Ascending aorta (tissue), 2 donors: ENCODE measurements at regions of chr19 and their contacts with region 1.

Region 1: DNA sequence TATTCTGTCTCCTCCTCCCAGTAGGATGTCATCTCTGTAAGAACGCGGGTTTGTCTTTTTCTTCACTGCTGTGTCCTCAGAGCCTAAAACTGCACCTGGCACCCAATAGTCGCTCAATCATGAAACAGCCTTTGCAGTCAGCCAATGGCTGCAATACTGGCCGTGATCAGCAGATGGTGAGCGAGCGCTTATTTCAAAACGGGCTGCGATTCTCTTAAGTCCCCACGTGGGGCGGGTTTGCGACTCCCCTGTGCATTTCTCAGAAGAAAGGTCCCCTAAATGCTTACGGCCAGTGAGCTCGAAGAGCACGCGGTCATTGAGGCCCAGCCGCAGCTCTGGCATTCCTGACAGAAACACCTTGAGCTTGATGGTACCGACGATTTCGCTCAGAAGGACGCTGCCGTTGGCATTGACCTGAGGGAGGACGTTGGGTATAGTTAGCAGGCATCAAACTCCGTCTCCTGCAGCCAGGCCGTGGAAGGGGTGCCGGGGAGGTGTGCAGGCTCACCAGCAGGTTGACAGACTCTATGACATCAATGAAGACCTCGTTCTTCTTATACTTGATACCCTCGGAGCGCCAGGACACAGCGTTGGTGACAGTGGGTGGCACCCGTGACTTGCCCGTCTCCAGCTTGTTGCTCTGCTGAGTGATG is 6.0 kb downstream of the AP1M2 start:
- DNase-seq: peak; percentile 60 to 95
- H3K4me3 ChIP-seq: no peak overlapping the region
- H3K27ac ChIP-seq: no peak overlapping the region
- H3K4me1 ChIP-seq: peaks cover 0 to 3% of the 10 kb centered on the region in 2 donors
- H3K27me3 ChIP-seq: no peaks in the 10 kb centered on the region
- CTCF ChIP-seq: peak; percentile 98 to 99 (median 99)

Region 2: GRCh38 chr19:10625003-10625776 is 44.1 kb after region 1 on chr19 and contains the start of gene SLC44A2:
- intact Hi-C with region 1: loop called (anchors 5 kb)
- DNase-seq: peak in 1 of 2 donors; percentile 83
- H3K4me3 ChIP-seq: peak within 1 kb of the TSS; percentile 67
- H3K27ac ChIP-seq: peak within 1 kb of the TSS; percentile 79 to 85
- H3K4me1 ChIP-seq: peaks cover 7 to 15% of the 10 kb centered on the region in 2 donors
- H3K27me3 ChIP-seq: no peaks in the 10 kb centered on the region
- CTCF ChIP-seq: no peak
- total RNA-seq, gene SLC44A2: 354 TPM

Region 3: GRCh38 chr19:10644260-10645007 is 63.3 kb after region 1 on chr19:
- intact Hi-C with region 1: loop called (anchors 1 kb)
- DNase-seq: peak; percentile 24 to 90
- H3K4me3 ChIP-seq: no peak overlapping the region
- H3K27ac ChIP-seq: peak overlapping the region; percentile 24 to 53
- H3K4me1 ChIP-seq: peaks cover 3 to 19% of the 10 kb centered on the region in 2 donors
- H3K27me3 ChIP-seq: no peaks in the 10 kb centered on the region
- CTCF ChIP-seq: peak; percentile 85 to 96 (median 87)

Region 4: GRCh38 chr19:10699650-10700335 is 118.7 kb after region 1 on chr19:
- intact Hi-C with region 1: loop called (anchors 1 kb)
- DNase-seq: no peak
- H3K4me3 ChIP-seq: no peak overlapping the region
- H3K27ac ChIP-seq: no peak overlapping the region
- H3K4me1 ChIP-seq: peaks cover 0 to 5% of the 10 kb centered on the region in 2 donors
- H3K27me3 ChIP-seq: no peaks in the 10 kb centered on the region
- CTCF ChIP-seq: peak; percentile 14 to 55 (median 27)